ENCODE measurements at regions of chr15 and their contacts with region 1.

Region 1: DNA sequence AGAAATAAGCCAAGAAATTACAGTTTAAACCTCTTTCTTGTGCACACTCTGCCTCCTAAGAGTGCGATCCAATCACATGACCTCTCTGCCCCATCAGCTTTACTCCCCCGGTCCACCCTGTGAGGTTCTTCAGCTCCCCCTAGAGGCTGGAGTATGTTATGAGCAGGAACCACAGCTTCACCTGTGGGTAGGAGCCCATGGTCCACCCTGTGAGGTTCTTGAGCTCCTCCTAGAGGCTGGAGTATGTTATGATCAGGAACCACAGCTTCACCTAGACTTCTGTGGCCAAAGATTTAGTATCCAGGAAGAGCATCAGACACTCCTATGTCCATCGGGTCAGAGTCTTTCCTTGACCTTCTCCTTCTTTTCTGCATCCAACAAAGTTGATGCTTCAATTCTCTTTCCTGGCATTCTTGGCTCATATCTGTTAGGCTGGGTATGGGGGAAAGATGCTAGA is 163.9 kb downstream of the MINAR1 start:
- DNase-seq: peak; percentile 95
- ATAC-seq: peak; percentile 99
- H3K4me3 ChIP-seq: no peak overlapping the region
- H3K27ac ChIP-seq: no peak overlapping the region
- H3K4me1 ChIP-seq: no peaks in the 10 kb centered on the region
- H3K27me3 ChIP-seq: peaks cover 14% of the 10 kb centered on the region
- CTCF ChIP-seq: peak; percentile 99 to 100 (median 99)
- POLR2A ChIP-seq: no peak
- RAD21 ChIP-seq: peak; percentile 89

Region 2: DNA sequence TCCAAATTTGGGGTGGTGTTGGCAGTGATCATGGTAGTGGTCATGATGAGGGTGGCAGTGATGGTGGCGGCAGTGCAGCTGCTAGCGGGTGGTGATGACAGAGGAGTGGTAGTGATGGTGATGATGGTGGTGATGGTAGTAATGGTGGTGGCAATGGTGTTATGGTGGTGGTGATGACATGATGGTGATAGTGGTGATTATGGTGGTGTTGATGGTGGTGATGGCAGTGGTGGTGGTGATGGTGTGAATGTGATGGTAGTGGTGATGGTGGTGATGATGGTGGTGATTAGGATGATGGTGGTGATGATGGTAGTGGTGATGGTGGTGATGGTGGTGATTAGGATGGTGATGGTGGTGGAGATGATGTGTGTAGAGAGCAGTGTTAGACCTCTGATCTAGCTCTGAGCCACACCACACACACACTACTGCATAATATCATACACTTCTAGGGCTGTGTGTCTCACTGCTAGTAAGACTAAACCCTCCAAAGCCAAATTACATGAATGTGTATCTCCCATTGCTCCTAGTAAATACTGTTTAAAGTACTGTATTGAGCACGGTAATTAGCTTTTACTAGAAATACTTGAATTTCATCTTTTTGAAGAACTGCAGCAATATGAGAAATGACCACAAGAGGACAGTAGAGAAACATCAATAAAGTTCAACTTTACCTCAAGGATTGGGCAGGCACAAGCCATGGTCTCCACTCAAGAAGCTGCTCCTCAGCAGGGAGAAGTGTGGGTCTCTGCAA is 256.3 kb before region 1 on chr15:
- CTCF ChIA-PET with region 1: interaction called, 41 read pairs
- POLR2A ChIA-PET with region 1: interaction called, 4 read pairs
- RAD21 ChIA-PET with region 1: interaction called in 1 of 2 experiments, 7 read pairs
- intact Hi-C with region 1: loop called (anchors 2 kb)
- DNase-seq: peak; percentile 29
- ATAC-seq: peak; percentile 70
- H3K4me3 ChIP-seq: no peak overlapping the region
- H3K27ac ChIP-seq: no peak overlapping the region
- H3K4me1 ChIP-seq: no peaks in the 10 kb centered on the region
- H3K27me3 ChIP-seq: no peaks in the 10 kb centered on the region
- CTCF ChIP-seq: peak; percentile 67 to 96 (median 76); a peak in 5 of 6 replicates
- POLR2A ChIP-seq: no peak
- RAD21 ChIP-seq: peak; percentile 72

Region 3: DNA sequence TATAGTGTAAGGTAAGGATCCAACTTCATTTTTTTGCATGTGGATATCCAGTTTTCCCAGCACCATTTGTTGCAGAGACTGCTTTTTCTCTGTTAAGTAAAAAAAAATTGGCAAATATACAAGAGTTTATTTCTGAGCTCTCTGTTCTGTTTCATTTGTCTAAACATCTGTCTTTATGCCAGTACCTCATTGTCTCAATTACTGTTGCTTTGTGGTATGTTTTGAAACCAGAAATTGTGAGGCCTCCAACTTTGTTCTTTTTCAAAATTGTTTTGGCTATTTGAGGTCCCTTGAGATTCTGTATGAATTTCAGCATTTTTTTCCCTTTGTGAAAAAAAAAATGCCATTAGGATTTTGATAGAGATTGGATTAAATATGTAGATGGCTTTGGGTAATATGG is 13.4 kb before region 1 on chr15:
- CTCF ChIA-PET with region 1: interaction called, 24 read pairs
- POLR2A ChIA-PET with region 1: no interaction called
- RAD21 ChIA-PET with region 1: interaction called in 1 of 2 experiments, 6 read pairs
- intact Hi-C with region 1: no loop called
- DNase-seq: no peak
- ATAC-seq: no peak
- H3K4me3 ChIP-seq: no peak overlapping the region
- H3K27ac ChIP-seq: no peak overlapping the region
- H3K4me1 ChIP-seq: no peaks in the 10 kb centered on the region
- H3K27me3 ChIP-seq: peaks cover 53% of the 10 kb centered on the region
- CTCF ChIP-seq: no peak
- POLR2A ChIP-seq: no peak
- RAD21 ChIP-seq: no peak

Region 4: GRCh38 chr15:79680720-79681119 is 84.6 kb after region 1 on chr15:
- CTCF ChIA-PET with region 1: no interaction called
- POLR2A ChIA-PET with region 1: no interaction called
- RAD21 ChIA-PET with region 1: no interaction called
- intact Hi-C with region 1: no loop called
- DNase-seq: no peak
- ATAC-seq: no peak
- H3K4me3 ChIP-seq: no peak overlapping the region
- H3K27ac ChIP-seq: no peak overlapping the region
- H3K4me1 ChIP-seq: no peaks in the 10 kb centered on the region
- H3K27me3 ChIP-seq: peaks cover 20% of the 10 kb centered on the region; the same call in 1 of the 2 replicates
- CTCF ChIP-seq: no peak
- POLR2A ChIP-seq: no peak
- RAD21 ChIP-seq: no peak

Region 5: GRCh38 chr15:79756365-79756764 is 160.3 kb after region 1 on chr15:
- CTCF ChIA-PET with region 1: no interaction called
- POLR2A ChIA-PET with region 1: no interaction called
- RAD21 ChIA-PET with region 1: no interaction called
- intact Hi-C with region 1: no loop called
- DNase-seq: no peak
- ATAC-seq: no peak
- H3K4me3 ChIP-seq: no peak overlapping the region
- H3K27ac ChIP-seq: no peak overlapping the region
- H3K4me1 ChIP-seq: no peaks in the 10 kb centered on the region
- H3K27me3 ChIP-seq: no peaks in the 10 kb centered on the region
- CTCF ChIP-seq: no peak
- POLR2A ChIP-seq: no peak
- RAD21 ChIP-seq: no peak

Measured in HCT116 (cell line).